Endothelial cell of umbilical vein (primary cell): ENCODE measurements at regions of chr4 and their contacts with region 1.

Region 1: DNA sequence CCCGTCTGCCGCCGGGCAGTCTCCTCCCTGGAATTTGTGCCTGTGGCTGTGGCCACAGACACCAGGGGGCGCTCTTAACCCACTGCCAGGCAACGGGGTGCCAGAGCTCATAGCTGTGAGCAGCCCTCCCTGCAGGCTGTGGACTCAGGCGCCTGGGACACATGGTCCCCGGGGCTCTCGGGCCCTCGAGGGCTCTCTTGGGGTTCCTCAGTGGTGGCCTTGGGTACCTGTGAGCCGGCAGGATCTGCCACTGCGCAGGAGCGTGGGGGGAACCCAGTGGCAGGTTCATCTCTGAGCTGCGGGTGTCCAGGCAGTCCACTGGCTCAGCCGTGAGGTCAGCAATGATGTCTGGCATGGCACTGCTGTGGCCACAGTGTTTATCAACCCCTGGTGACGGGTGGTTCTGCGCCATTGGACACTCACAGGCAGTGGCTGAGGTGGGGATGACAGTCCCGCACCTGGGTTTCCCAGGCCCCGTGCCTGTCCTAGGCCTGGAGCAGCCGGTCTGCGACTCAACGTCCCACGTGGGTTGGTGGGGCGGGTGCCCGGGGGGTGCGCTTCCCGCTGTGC is 37.2 kb downstream of the PCGF3 start:
- DNase-seq: peak; percentile 52
- H3K4me3 ChIP-seq: no peak overlapping the region
- H3K27ac ChIP-seq: no peak overlapping the region
- H3K4me1 ChIP-seq: no peaks in the 10 kb centered on the region
- H3K27me3 ChIP-seq: no peaks in the 10 kb centered on the region
- CTCF ChIP-seq: peak; percentile 77 to 93
- POLR2A ChIP-seq: no peak

Region 2: GRCh38 chr4:663438-664428 is 79.1 kb before region 1 on chr4:
- CTCF ChIA-PET with region 1: no interaction called
- POLR2A ChIA-PET with region 1: no interaction called
- dilution Hi-C with region 1: no loop called
- intact Hi-C with region 1: no loop called
- DNase-seq: no peak
- H3K4me3 ChIP-seq: peak overlapping the region in 1 of 3 experiments; percentile 38
- H3K27ac ChIP-seq: no peak overlapping the region
- H3K4me1 ChIP-seq: no peaks in the 10 kb centered on the region
- H3K27me3 ChIP-seq: peaks cover 0 to 5% of the 10 kb centered on the region in 2 experiments
- CTCF ChIP-seq: no peak
- POLR2A ChIP-seq: no peak

Region 3: GRCh38 chr4:700587-701264 is 42.1 kb before region 1 on chr4:
- CTCF ChIA-PET with region 1: no interaction called
- POLR2A ChIA-PET with region 1: no interaction called
- dilution Hi-C with region 1: no loop called
- intact Hi-C with region 1: no loop called
- DNase-seq: no peak
- H3K4me3 ChIP-seq: no peak overlapping the region
- H3K27ac ChIP-seq: no peak overlapping the region
- H3K4me1 ChIP-seq: no peaks in the 10 kb centered on the region
- H3K27me3 ChIP-seq: no peaks in the 10 kb centered on the region
- CTCF ChIP-seq: no peak
- POLR2A ChIP-seq: no peak

Region 4: DNA sequence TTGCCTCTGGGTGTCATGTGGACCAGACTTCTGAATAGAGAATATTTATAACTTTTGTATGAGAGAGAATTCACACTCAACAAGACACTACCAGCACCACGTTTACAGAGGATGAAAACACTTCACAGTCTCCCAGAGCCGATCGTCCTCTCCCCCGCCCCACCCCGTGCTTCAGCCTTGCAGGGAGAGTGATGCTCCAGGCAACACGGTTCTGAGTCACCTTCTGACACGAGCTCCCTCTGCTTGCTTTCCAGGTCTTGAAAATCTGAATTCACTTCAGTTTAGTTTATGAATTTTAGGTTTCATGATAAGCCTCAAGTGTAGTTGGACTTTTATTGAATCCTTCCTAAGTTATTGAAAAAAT is 23.3 kb after region 1 on chr4:
- CTCF ChIA-PET with region 1: interaction called, 13 read pairs
- POLR2A ChIA-PET with region 1: no interaction called
- dilution Hi-C with region 1: no loop called
- intact Hi-C with region 1: no loop called
- DNase-seq: no peak
- H3K4me3 ChIP-seq: no peak overlapping the region
- H3K27ac ChIP-seq: no peak overlapping the region
- H3K4me1 ChIP-seq: no peaks in the 10 kb centered on the region
- H3K27me3 ChIP-seq: no peaks in the 10 kb centered on the region
- CTCF ChIP-seq: no peak
- POLR2A ChIP-seq: no peak

Region 5: GRCh38 chr4:891747-892146 is 148.9 kb after region 1 on chr4:
- CTCF ChIA-PET with region 1: no interaction called
- POLR2A ChIA-PET with region 1: no interaction called
- dilution Hi-C with region 1: no loop called
- intact Hi-C with region 1: no loop called
- DNase-seq: no peak
- H3K4me3 ChIP-seq: no peak overlapping the region
- H3K27ac ChIP-seq: no peak overlapping the region
- H3K4me1 ChIP-seq: no peaks in the 10 kb centered on the region
- H3K27me3 ChIP-seq: no peaks in the 10 kb centered on the region
- CTCF ChIP-seq: peak in 1 of 2 donors; percentile 16
- POLR2A ChIP-seq: no peak